Adrenal gland (tissue), 19 donors: ENCODE measurements at regions of chr12 and their contacts with region 1.

Region 1: GRCh38 chr12:40152783-40153383 is 47.0 kb upstream of the SLC2A13 start:
- DNase-seq: peak; percentile 19 to 80 (median 40)
- H3K4me3 ChIP-seq: no peak overlapping the region
- H3K27ac ChIP-seq: no peak overlapping the region
- H3K4me1 ChIP-seq: peaks cover 0 to under 1% of the 10 kb centered on the region in 2 donors
- H3K27me3 ChIP-seq: no peaks in the 10 kb centered on the region
- CTCF ChIP-seq: peak; percentile 55 to 89 (median 67)
- POLR2A ChIP-seq: no peak

Region 2: DNA sequence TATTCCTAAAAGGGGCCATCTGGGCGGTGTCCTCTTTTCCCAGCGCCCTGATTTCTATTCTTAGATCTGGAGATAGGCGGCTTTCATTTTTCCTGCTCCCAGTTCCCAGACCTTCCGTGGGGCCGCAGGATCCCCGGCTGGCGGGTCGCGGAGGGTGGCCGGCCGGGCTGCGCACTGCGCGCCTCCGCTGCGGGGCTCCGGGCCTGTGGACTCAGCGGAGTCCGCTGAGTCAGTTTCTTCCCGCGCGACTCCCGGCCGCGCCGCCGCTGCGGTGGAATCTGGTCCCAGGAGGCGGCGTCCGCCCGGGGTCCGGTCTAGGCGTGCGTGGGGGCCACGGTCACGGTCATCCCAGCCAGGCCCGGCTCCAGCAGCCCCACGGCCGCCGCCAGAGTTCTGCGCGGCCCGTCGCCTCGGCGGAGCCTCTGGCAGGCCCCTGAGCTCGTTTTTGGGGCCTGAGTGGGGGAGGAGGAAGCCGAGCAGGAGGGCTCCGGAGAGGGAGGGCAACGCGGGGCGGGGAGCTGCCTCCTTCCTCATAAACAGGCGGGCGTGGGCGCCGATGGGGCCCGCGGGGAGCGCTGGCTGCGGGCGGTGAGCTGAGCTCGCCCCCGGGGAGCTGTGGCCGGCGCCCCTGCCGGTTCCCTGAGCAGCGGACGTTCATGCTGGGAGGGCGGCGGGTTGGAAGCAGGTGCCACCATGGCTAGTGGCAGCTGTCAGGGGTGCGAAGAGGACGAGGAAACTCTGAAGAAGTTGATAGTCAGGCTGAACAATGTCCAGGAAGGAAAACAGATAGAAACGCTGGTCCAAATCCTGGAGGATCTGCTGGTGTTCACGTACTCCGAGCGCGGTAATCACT is 71.8 kb after region 1 on chr12 and contains the start of gene LRRK2:
- intact Hi-C with region 1: loop called in 1 of 2 experiments (anchors 10 kb)
- DNase-seq: peak; percentile 80 to 89 (median 85)
- H3K4me3 ChIP-seq: peak within 1 kb of the TSS; percentile 19 to 84 (median 79)
- H3K27ac ChIP-seq: peak within 1 kb of the TSS; percentile 89 to 96 (median 95)
- H3K4me1 ChIP-seq: peaks cover 14 to 24% of the 10 kb centered on the region in 2 donors
- H3K27me3 ChIP-seq: no peaks in the 10 kb centered on the region
- CTCF ChIP-seq: peak in 1 of 6 experiments; percentile 6
- POLR2A ChIP-seq: peak; percentile 75 to 84
- total RNA-seq, gene LRRK2: 7.9 to 25.6 (median 14.5) TPM

Region 3: GRCh38 chr12:40312982-40313576 is 160.2 kb after region 1 on chr12:
- intact Hi-C with region 1: loop called (anchors 10 kb)
- DNase-seq: no peak
- H3K4me3 ChIP-seq: no peak overlapping the region
- H3K27ac ChIP-seq: no peak overlapping the region
- H3K4me1 ChIP-seq: no peaks in the 10 kb centered on the region
- H3K27me3 ChIP-seq: no peaks in the 10 kb centered on the region
- CTCF ChIP-seq: peak; percentile 23 to 58 (median 40)
- POLR2A ChIP-seq: no peak